Prostate gland (tissue), 2 donors: ENCODE measurements at regions of chr9 and their contacts with region 1.

Region 1: DNA sequence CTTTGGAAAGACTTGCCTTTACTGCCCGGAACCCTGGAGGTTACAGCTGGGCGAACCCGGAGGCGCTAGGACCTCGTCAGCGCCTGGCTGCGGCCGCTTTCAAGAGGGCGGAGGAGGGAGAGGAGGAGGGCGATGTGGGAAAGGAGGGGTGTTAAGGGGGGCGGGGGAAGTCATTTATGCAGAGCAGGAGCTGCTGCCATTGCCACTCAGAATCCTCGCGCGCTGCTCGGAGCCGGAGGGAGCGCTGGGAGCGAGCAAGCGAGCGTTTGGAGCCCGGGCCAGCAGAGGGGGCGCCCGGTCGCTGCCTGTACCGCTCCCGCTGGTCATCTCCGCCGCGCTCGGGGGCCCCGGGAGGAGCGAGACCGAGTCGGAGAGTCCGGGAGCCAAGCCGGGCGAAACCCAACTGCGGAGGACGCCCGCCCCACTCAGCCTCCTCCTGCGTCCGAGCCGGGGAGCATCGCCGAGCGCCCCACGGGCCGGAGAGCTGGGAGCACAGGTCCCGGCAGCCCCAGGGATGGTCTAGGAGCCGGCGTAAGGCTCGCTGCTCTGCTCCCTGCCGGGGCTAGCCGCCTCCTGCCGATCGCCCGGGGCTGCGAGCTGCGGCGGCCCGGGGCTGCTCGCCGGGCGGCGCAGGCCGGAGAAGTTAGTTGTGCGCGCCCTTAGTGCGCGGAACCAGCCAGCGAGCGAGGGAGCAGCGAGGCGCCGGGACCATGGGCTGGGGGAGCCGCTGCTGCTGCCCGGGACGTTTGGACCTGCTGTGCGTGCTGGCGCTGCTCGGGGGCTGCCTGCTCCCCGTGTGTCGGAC is at the start of gene PCSK5:
- DNase-seq: peak; percentile 85
- H3K4me3 ChIP-seq: peak within 1 kb of the TSS; percentile 66 to 68
- H3K27ac ChIP-seq: peak within 1 kb of the TSS; percentile 74 to 78
- H3K4me1 ChIP-seq: no peaks in the 10 kb centered on the region
- H3K27me3 ChIP-seq: no peaks in the 10 kb centered on the region
- CTCF ChIP-seq: peak in 2 of 4 experiments; percentile 22 to 24
- POLR2A ChIP-seq: peak; percentile 90
- total RNA-seq, gene PCSK5: 2.4 to 32.2 TPM

Region 2: GRCh38 chr9:76032038-76032796 is 141.5 kb after region 1 on chr9:
- intact Hi-C with region 1: loop called (anchors 10 kb)
- DNase-seq: no peak
- H3K4me3 ChIP-seq: no peak overlapping the region
- H3K27ac ChIP-seq: no peak overlapping the region
- H3K4me1 ChIP-seq: no peaks in the 10 kb centered on the region
- H3K27me3 ChIP-seq: no peaks in the 10 kb centered on the region
- CTCF ChIP-seq: no peak
- POLR2A ChIP-seq: no peak

Region 3: DNA sequence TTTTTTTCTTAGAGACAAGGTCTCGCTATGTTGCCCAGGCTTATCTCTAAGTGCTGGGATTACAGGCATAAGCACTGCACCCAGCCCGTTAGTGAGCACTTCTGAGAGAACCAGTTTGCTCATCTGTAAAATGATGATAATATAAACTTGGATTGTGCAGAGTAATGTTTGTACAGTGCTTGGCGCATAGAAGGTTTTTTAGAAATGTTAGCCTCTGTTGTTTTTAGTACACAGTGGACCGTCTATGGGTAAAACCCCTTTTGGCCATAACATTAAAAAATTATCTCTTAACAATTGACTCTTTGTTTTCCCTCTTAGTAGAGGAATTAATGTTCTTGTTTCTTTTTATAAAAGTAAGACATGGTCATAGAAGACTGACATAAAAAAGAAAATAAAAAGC is 201.9 kb after region 1 on chr9:
- intact Hi-C with region 1: no loop called
- DNase-seq: no peak
- H3K4me3 ChIP-seq: no peak overlapping the region
- H3K27ac ChIP-seq: no peak overlapping the region
- H3K4me1 ChIP-seq: no peaks in the 10 kb centered on the region
- H3K27me3 ChIP-seq: no peaks in the 10 kb centered on the region
- CTCF ChIP-seq: no peak
- POLR2A ChIP-seq: no peak

Region 4: DNA sequence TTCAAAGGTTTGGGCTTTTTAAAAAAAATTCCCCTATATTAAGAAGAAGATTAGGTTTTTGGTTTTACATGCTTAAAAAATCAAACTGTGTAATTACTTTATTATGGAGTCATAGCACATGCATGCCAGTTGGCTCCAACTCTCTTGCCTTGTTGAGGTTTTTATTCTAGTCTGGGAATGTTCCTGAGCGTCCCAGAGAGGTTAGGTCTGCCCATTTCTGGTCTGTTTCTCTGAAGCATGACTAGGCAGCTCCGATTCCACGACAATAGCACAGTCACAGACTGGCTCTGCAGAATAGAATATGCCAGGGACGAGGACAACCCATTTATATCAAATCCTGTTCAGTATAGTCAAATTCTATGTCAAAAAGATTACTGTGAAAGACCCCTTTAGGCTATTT is 216.8 kb after region 1 on chr9:
- intact Hi-C with region 1: loop called (anchors 5 kb)
- DNase-seq: no peak
- H3K4me3 ChIP-seq: no peak overlapping the region
- H3K27ac ChIP-seq: no peak overlapping the region
- H3K4me1 ChIP-seq: no peaks in the 10 kb centered on the region
- H3K27me3 ChIP-seq: no peaks in the 10 kb centered on the region
- CTCF ChIP-seq: no peak
- POLR2A ChIP-seq: no peak

Region 5: DNA sequence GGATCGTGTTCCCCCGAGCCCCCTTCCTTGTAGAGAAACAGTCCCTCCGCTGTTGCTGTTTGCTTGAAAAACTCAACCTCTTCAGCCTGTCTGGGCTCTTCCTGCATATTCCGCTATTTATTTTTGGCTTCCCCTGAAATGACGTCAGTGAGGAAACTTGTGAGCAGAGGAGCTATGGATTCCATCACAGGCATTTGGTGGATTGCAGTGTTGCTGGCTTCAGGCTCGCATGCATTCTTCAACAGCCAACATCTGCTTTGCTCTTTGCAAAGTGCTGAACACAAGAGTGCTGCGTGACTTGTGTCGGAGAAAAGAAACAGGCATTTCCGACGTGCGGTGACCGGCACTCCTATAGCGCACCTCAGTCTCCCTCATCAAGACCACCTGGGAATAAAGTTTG is 270.9 kb after region 1 on chr9:
- intact Hi-C with region 1: loop called (anchors 5 kb)
- DNase-seq: no peak
- H3K4me3 ChIP-seq: no peak overlapping the region
- H3K27ac ChIP-seq: no peak overlapping the region
- H3K4me1 ChIP-seq: no peaks in the 10 kb centered on the region
- H3K27me3 ChIP-seq: no peaks in the 10 kb centered on the region
- CTCF ChIP-seq: no peak
- POLR2A ChIP-seq: no peak

Region 6: DNA sequence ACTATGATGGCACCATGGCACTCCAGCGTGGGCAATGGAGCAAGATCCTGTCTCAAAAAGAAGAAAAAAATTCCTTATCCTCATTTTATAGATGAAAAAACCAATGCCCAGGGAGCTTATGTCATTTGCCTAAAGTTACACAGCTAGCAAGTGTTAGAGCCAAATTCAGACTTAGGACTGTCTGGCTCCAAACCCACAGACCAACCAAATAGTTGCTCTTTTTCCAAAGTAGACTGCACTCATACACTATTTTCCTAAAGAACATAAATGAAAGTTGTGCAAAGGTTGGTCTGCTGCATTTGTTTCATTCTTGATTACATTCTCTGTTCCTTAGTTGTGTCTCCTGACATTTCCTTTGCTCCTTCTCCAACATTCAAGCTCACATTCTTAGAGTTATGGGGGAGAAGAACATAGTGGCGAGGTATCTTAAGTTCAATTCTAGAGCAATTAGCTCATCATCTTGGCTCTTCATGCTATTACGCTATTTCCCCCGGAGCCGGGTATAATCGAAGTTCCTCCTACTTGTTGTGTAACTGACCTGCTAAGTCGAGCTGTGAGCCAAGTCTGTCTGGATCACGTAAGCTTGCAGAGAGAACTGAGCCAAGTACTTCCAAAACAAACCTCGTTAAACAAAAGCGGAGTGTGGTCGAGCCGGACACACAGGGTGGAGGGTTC is 365.2 kb after region 1 on chr9:
- intact Hi-C with region 1: loop called (anchors 10 kb)
- DNase-seq: peak; percentile 73
- H3K4me3 ChIP-seq: no peak overlapping the region
- H3K27ac ChIP-seq: no peak overlapping the region
- H3K4me1 ChIP-seq: no peaks in the 10 kb centered on the region
- H3K27me3 ChIP-seq: no peaks in the 10 kb centered on the region
- CTCF ChIP-seq: no peak
- POLR2A ChIP-seq: no peak

Region 7: GRCh38 chr9:76297721-76298239 is 407.1 kb after region 1 on chr9:
- intact Hi-C with region 1: loop called (anchors 5 kb)
- DNase-seq: no peak
- H3K4me3 ChIP-seq: no peak overlapping the region
- H3K27ac ChIP-seq: no peak overlapping the region
- H3K4me1 ChIP-seq: no peaks in the 10 kb centered on the region
- H3K27me3 ChIP-seq: no peaks in the 10 kb centered on the region
- CTCF ChIP-seq: no peak
- POLR2A ChIP-seq: no peak

Region 8: DNA sequence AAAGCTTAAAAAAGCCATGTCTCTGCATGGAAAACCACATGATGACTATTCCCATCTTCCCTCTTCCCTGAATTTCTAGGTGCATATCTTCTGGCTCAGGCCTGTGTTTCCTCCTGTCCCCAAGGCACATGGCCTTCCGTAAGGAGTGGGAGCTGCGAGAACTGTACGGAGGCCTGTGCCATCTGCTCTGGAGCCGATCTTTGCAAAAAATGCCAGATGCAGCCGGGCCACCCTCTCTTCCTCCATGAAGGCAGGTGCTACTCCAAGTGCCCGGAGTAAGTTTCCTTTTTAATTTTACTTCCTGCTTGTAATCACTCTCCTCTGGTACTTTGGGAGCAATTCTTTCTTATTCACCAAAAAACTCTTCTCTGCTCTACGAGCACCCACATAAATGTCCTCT is 419.9 kb after region 1 on chr9:
- intact Hi-C with region 1: no loop called
- DNase-seq: no peak
- H3K4me3 ChIP-seq: no peak overlapping the region
- H3K27ac ChIP-seq: no peak overlapping the region
- H3K4me1 ChIP-seq: no peaks in the 10 kb centered on the region
- H3K27me3 ChIP-seq: no peaks in the 10 kb centered on the region
- CTCF ChIP-seq: no peak
- POLR2A ChIP-seq: no peak

Region 9: DNA sequence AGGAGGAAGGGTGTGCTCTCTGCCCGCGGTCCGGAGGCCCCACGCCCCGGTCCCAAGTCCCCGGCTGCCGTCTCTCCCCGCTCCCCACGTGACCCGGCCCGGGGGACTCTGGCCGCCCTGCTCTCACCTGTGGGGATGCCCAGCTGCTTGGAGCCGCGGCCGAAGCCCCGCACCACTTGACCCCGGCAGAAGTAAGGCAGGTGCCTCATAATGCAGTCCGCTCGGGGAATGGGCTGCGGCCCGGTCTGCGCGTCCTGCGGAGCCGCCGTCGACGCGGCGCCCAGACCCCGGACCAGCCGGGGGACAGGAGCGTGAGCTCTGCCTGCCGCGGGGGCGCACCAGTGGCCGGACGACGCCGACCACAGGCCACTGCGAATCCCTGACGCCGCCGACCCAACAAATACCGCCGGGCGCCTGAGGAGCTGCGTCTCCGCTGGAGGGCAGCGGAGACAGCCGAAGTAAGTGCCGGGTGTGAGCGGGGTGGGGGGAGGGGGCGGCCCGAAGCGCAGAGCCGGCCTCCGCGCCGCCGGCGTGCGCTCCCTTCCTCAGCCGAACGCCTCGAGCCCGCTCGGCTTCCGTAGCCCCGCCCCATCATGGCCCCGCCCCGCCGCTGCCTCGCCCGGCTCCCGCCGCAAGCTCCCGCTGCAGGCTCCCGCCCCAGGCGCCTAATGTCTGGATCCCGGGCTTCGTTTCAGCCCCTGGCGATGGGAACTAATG is 503.4 kb after region 1 on chr9 and contains the start of gene RFK:
- intact Hi-C with region 1: loop called (anchors 10 kb)
- DNase-seq: peak; percentile 92
- H3K4me3 ChIP-seq: peak within 1 kb of the TSS; percentile 65 to 72
- H3K27ac ChIP-seq: peak within 1 kb of the TSS; percentile 85 to 93
- H3K4me1 ChIP-seq: no peaks in the 10 kb centered on the region
- H3K27me3 ChIP-seq: no peaks in the 10 kb centered on the region
- CTCF ChIP-seq: peak; percentile 10 to 72 (median 70)
- POLR2A ChIP-seq: peak; percentile 52
- total RNA-seq, gene RFK: 18.4 to 23.5 TPM